BJ (cell line): ENCODE measurements at regions of chr1 and their contacts with region 1.

Region 1: DNA sequence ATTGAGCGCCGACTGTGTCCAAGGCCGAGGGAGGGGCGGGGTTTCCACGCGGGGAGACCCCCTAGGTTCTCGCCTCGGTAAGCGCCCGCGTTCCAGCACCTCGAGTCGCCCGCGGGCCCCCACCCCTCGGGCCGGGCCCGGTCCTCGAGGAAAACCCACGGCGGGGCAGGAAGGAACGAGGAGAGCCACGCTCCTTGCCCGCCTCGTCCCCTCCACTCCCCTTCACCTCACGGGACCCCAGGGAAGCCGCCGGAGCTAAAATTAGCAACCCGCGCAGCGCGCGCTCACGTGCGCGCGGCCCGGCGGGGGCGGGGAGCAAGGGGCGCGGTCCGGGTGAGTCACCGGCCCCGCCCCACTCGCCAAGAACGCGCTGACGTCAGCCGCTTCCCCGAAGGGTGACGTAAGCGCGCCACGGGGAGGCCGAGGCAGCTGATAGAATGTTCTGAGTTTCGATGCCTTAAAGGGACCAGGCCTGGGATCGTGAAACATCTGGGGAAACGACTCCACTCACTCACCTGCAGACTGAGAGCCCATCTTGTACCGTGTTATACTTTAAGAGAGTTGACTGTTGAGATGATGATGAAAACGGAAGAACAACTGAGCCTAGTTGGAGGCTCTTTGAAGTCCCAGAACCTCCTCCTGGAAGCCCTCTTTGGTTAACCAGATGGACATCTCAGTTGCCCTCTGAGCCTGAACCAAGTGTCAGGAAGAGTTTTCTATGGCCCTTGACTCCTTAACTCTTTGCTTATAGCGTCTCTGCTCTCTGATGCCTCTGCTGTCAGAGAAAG is 49.7 kb upstream of the ATF3 start:
- DNase-seq: peak; percentile 35
- H3K4me3 ChIP-seq: peak overlapping the region; percentile 76
- H3K27me3 ChIP-seq: peaks cover 2% of the 10 kb centered on the region; the same call in 1 of the 2 replicates
- CTCF ChIP-seq: no peak

Region 2: DNA sequence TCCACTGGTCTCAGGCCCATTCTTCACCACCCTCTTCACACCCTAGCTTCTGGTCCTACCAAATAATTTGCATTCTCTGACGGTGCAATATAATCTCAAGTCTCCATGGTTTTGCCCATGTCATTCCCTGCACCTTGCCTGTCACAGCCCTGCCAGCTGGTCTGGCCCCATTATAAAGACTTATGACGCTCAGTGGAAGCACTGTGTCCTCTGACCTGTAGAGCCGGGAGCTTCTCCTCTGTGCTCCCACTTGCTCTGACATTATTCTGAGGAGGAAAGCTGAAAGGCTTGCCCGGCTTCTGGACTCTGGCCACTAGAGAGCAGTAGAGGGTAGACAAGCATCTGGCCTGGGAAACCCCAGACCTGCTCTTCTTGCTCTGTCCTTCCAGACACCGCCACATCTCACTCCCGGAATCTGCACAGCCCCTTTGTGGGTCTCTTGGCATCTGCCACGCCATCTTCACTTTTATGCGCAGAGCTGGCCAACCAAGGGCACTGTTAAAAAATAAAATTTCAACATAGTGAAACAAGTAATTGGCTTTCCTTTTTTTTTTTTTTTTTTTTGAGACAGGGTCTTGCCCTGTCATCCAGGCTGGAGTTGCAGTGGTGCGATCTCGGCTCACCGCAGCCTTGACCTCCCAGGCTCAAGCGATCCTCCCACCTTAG is 81.7 kb before region 1 on chr1:
- CTCF ChIA-PET with region 1: interaction called, 10 read pairs
- POLR2A ChIA-PET with region 1: no interaction called
- DNase-seq: peak; percentile 30
- H3K4me3 ChIP-seq: no peak overlapping the region
- H3K27me3 ChIP-seq: peaks cover 3% of the 10 kb centered on the region; the same call in 1 of the 2 replicates
- CTCF ChIP-seq: peak; percentile 94

Region 3: DNA sequence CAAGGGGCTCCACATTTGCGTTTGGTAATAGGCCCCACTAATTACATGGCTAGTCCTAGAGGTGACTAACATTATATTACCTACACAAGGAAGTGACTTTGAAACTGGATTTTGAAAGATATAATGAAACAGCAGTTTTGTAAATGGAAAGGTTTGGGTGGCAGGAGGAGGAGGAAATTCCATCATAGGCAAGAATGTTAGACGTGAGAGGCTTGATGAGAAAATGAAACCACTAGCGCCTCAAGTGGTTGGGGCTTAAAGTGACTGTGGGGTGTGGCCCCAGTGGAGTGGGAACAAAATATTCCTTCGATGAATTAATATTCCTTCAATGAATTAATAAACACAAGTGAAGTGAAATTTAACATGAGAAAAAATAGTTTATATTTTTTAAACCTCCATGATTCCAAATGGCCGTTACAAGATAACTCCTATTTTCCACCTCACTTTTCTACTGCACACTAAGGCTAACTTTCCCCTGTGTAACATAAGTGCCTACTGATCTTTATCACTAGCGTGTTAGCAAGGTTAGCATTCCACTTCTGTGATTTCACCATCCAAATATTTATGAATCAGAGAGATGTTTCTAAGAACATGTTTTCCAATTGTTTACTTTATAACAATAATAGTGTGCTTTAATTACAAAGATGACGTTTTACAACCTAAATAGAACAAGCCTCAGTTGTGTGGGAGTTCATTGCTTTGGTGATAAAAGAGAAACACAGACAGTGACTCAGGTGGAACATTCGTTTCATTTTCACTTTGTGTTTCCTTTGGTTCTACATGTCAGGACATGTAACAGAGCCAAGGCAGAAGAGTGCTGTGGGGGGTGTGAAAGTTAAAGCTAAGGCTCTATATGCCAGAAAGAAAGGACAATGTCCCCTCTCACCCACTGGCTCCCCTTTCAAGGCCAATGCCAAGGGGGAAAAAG is 37.2 kb after region 1 on chr1:
- CTCF ChIA-PET with region 1: no interaction called
- POLR2A ChIA-PET with region 1: no interaction called
- DNase-seq: peak; percentile 98
- H3K4me3 ChIP-seq: 0 out of 2 replicates have a peak overlapping the region, but pooled peaks have one; percentile 4
- H3K27me3 ChIP-seq: peaks cover 9% of the 10 kb centered on the region
- CTCF ChIP-seq: peak; percentile 61

Region 4: DNA sequence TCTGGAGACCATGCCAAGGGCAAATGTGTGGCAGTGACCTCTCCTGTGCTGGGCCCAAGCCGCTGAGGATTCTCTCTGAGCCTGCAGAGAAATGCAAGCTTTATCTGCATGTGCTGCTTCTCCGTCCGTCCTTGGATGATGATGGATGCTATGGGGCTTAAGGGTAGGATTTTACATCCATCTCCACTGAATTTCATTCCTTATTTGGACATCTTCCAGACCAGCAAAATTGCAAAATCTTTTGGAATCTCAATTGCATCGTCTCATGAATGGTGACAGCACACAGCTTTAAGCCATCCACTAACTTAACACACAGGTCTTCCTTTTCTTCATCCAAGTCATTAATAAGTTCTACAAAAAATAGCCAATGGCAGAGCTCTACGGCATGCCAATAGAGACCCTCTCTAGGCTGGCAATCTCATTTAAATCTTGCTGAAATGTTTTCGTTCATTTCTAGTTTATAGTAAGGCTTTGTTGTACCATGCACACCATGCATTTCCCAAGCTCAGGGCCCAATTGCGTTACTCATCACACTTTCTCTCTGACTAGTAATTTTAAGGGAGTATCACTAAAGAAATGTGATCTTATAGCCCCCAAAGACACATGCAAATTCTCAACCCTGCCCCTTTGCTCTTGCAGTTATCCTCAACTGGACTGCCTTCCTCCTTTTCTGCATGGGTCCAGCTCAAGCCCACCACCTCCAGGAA is 129.6 kb after region 1 on chr1:
- CTCF ChIA-PET with region 1: no interaction called
- POLR2A ChIA-PET with region 1: interaction called, 20 read pairs
- DNase-seq: no peak
- H3K4me3 ChIP-seq: no peak overlapping the region
- H3K27me3 ChIP-seq: no peaks in the 10 kb centered on the region; the same call in 1 of the 2 replicates
- CTCF ChIP-seq: no peak